ENCODE measurements at regions of chr1 and their contacts with region 1.

Region 1: DNA sequence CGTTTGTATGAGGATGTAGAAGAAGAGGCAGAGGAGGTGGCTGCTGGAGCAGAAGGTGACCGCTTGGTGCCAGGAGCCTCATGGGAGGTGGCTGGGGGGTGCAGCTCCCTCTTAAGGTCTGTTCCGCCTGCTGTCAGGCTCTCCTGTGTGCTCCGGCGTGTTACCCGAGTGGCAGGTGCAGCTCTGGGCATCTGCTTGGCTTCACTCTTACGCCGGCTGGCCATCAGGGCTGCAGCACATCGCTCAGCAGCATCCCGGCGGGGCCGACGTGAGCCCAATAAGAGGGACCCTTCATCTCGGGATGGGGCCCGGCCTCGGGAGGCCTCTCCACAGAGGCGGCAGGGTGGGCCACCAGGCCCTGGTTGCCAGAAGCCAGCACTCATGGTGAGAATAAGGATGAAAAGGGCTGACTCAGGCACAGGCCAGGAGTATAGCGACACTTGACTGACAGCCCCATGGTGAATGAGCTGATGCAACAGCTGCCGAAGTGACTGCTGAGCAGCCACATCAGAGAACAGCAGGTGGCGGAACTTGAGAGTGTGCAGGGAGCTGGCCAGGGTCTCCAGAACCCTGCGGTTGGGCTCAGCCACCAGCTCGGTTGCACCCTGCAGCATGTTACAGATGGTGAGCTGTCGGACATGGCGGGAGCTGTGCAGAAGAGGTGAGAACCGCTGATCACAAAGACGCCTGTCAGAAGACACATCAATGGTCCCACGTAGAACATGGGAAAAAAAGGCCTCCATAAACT is 17.5 kb downstream of the LRRC41 start:
- DNase-seq: peak in 2 of 4 experiments; percentile 42 to 57
- ATAC-seq: peak; percentile 80
- H3K4me3 ChIP-seq: no peak overlapping the region
- H3K27ac ChIP-seq: no peak overlapping the region; the same call in 2 of the 3 replicates
- H3K4me1 ChIP-seq: peaks cover 23 to 33% of the 10 kb centered on the region in 2 experiments; a peak in 3 of 5 replicates
- H3K27me3 ChIP-seq: no peaks in the 10 kb centered on the region
- CTCF ChIP-seq: peak in 2 of 3 experiments; percentile 12 to 39; a peak in 2 of 6 replicates
- EP300 ChIP-seq: peak; percentile 66
- POLR2A ChIP-seq: peak; percentile 38; the same call in 1 of the 2 replicates
- RAD21 ChIP-seq: peak; percentile 21 to 55

Region 2: GRCh38 chr1:46262508-46262907 is 23.4 kb before region 1 on chr1:
- CTCF ChIA-PET with region 1: no interaction called
- POLR2A ChIA-PET with region 1: interaction called, 103 read pairs
- in situ Hi-C with region 1: no loop called
- intact Hi-C with region 1: no loop called
- DNase-seq: no peak
- ATAC-seq: no peak
- H3K4me3 ChIP-seq: no peak overlapping the region
- H3K27ac ChIP-seq: no peak overlapping the region
- H3K4me1 ChIP-seq: no peaks in the 10 kb centered on the region
- H3K27me3 ChIP-seq: no peaks in the 10 kb centered on the region
- CTCF ChIP-seq: no peak
- EP300 ChIP-seq: no peak
- POLR2A ChIP-seq: no peak
- RAD21 ChIP-seq: no peak

Region 3: GRCh38 chr1:46303038-46303871 is 17.4 kb after region 1 on chr1 and contains the starts of genes LRRC41 and UQCRH:
- CTCF ChIA-PET with region 1: no interaction called
- POLR2A ChIA-PET with region 1: interaction called, 410 read pairs
- in situ Hi-C with region 1: no loop called
- intact Hi-C with region 1: loop called (anchors 2 kb)
- DNase-seq: peak; percentile 87 to 100 (median 92)
- ATAC-seq: peak; percentile 80
- H3K4me3 ChIP-seq: peak within 1 kb of the TSS; percentile 76
- H3K27ac ChIP-seq: peak within 1 kb of the TSS; percentile 96
- H3K4me1 ChIP-seq: peaks cover 36 to 44% of the 10 kb centered on the region in 2 experiments; a peak in 4 of 5 replicates
- H3K27me3 ChIP-seq: no peaks in the 10 kb centered on the region
- CTCF ChIP-seq: peak; percentile 20 to 46 (median 46); a peak in 3 of 6 replicates
- EP300 ChIP-seq: peak; percentile 15
- POLR2A ChIP-seq: peak; percentile 98
- RAD21 ChIP-seq: 0 out of 4 replicates have a peak, but pooled peaks of 1 of the 2 experiments have one; percentile 2
- polyA plus RNA-seq, gene LRRC41: 10.5 to 11.7 TPM
- polyA plus RNA-seq, gene UQCRH: 4,348 to 5,184 TPM